H1 (cell line): ENCODE measurements at regions of chr19 and their contacts with region 1.

Region 1: DNA sequence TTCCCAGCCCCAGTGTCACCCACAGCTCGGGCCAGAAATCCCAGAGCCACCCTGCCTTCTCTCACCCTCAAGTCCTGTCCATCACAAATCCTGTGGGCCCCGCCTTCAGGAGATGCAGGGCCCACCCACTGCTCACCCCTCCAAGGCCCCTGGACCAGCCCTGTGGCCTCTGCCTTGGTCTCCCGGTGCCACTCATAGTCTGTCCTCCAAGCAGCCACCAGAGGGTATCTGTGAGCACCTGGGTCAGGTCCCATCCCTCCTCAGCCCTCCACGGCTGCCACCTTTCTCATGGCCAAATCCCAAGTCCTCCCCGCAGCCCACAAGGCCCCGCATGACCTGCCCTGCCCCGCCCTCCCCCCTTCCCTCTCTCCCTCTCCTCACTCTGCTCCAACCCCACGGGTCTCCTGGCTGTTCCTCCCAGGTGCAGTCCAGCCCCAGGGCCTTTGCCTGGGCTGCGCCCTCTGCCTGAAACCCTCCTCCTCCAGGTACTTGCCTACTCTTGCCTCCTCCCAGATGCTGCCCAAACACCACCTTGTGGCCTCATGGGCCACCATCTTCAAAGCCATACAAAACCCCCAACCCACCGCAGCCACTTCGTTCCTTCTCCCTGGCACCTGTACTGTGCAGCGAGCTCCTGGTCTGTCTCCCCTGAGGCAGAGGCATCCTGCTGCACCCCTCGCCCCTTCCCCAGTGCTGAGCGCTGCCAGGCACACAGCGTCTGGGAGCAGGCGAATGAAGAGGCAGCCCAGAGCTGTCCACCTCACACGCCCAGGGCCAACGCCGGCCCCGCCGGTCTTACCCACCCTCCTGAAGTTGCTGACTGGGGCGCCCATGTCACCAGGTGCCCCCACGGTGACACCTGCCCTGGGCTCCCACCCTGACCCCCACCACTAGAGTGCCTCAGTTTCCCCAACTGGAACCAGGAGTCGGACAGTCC is 13.2 kb upstream of the UQCR11 start:
- DNase-seq: peak; percentile 54 to 73
- H3K4me3 ChIP-seq: no peak overlapping the region
- H3K27ac ChIP-seq: no peak overlapping the region
- H3K4me1 ChIP-seq: peaks cover 0 to 8% (median 4%) of the 10 kb centered on the region in 4 experiments; a peak in 3 of 7 replicates
- H3K27me3 ChIP-seq: no peaks in the 10 kb centered on the region
- CTCF ChIP-seq: peak; percentile 64 to 77 (median 75)
- EP300 ChIP-seq: no peak
- POLR2A ChIP-seq: no peak
- RAD21 ChIP-seq: peak; percentile 32 to 48; a peak in 3 of 4 replicates

Region 2: GRCh38 chr19:1560286-1560882 is 58.0 kb before region 1 on chr19:
- CTCF ChIA-PET with region 1: no interaction called
- POLR2A ChIA-PET with region 1: no interaction called
- DNase-seq: no peak
- H3K4me3 ChIP-seq: no peak overlapping the region
- H3K27ac ChIP-seq: no peak overlapping the region
- H3K4me1 ChIP-seq: no peaks in the 10 kb centered on the region; a peak in 1 of 7 replicates
- H3K27me3 ChIP-seq: no peaks in the 10 kb centered on the region
- CTCF ChIP-seq: no peak
- EP300 ChIP-seq: no peak
- POLR2A ChIP-seq: no peak
- RAD21 ChIP-seq: no peak

Region 3: GRCh38 chr19:1605236-1606137 is 12.9 kb before region 1 on chr19 and contains the start of gene UQCR11:
- CTCF ChIA-PET with region 1: interaction called, 10 read pairs
- POLR2A ChIA-PET with region 1: interaction called, 26 read pairs
- DNase-seq: peak; percentile 79 to 90
- H3K4me3 ChIP-seq: peak within 1 kb of the TSS; percentile 64 to 86 (median 72)
- H3K27ac ChIP-seq: peak within 1 kb of the TSS; percentile 82
- H3K4me1 ChIP-seq: peaks cover 0 to 7% (median 3%) of the 10 kb centered on the region in 4 experiments; a peak in 6 of 7 replicates
- H3K27me3 ChIP-seq: no peaks in the 10 kb centered on the region
- CTCF ChIP-seq: peak; percentile 45 to 72 (median 50); a peak in 3 of 4 replicates
- EP300 ChIP-seq: no peak
- POLR2A ChIP-seq: peak in 1 of 2 experiments; percentile 49; a peak in 2 of 3 replicates
- RAD21 ChIP-seq: peak; percentile 66 to 73
- total RNA-seq, gene UQCR11: 162 and 179 TPM in 2 replicates